ENCODE measurements at regions of chr19 and their contacts with region 1.

Region 1: GRCh38 chr19:40425450-40426287 is at the start of gene SERTAD1:
- DNase-seq: peak; percentile 98
- ATAC-seq: peak; percentile 79
- H3K4me3 ChIP-seq: peak within 1 kb of the TSS; percentile 65 to 84
- H3K27ac ChIP-seq: peak within 1 kb of the TSS; percentile 98
- H3K4me1 ChIP-seq: peaks cover 27 to 57% of the 10 kb centered on the region in 2 experiments
- H3K27me3 ChIP-seq: no peaks in the 10 kb centered on the region
- CTCF ChIP-seq: peak; percentile 23 to 82 (median 75); a peak in 5 of 6 replicates
- POLR2A ChIP-seq: peak; percentile 97
- RAD21 ChIP-seq: peak; percentile 36
- total RNA-seq, gene SERTAD1: 30.3 TPM

Region 2: DNA sequence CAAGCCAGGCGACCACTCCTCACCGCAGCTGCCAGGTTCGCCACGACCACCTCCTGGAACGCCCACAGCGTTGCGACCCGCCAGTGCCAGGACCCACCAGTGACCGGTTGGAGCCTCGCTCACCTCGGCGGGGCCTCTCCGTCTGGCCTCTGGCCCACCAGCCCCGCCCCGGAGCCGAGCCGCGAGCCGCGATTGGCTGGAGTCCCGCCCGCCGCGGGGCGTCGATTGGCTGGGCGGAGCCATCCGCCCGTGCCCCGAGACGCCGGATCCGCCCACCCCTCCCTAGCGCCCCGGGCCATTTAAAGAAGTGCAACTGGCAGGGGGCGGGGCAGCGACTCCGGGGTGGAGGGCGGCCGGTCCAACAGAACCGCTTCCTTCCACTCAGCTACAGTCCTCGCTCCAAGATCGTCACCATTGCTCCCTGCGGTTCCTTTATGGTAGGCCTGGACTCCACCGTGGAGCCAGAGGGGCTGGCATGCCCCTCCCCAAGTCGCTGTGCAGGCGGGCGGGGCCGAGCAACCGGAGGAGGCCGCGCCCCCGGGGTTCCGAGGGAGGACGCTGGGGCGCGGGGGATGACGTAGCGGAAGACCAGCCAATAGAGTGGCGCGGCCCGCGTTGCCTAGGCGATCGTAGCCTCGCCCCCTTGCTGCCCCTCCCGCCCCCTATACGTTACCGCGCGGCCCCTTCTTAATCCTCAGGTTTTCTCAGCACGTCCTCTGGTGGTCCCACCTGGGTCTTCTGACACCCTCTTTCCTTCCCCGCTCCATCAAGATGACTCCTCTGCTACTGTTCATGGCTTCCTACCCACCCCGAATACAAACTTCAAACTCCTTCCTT is 18.7 kb after region 1 on chr19 and contains the start of gene SERTAD3:
- CTCF ChIA-PET with region 1: interaction called, 10 read pairs
- POLR2A ChIA-PET with region 1: interaction called, 28 read pairs
- RAD21 ChIA-PET with region 1: no interaction called
- intact Hi-C with region 1: loop called (anchors 1 kb)
- DNase-seq: peak; percentile 85
- ATAC-seq: peak; percentile 75
- H3K4me3 ChIP-seq: peak within 1 kb of the TSS; percentile 71 to 100
- H3K27ac ChIP-seq: peak within 1 kb of the TSS; percentile 97
- H3K4me1 ChIP-seq: peaks cover 20 to 31% of the 10 kb centered on the region in 2 experiments
- H3K27me3 ChIP-seq: no peaks in the 10 kb centered on the region
- CTCF ChIP-seq: 0 out of 6 replicates have a peak, but pooled peaks of 1 of the 3 experiments have one; percentile 12
- POLR2A ChIP-seq: peak; percentile 71
- RAD21 ChIP-seq: peak; percentile 39
- total RNA-seq, gene SERTAD3: 32.4 TPM

Region 3: GRCh38 chr19:40502647-40503319 is 77.1 kb after region 1 on chr19:
- CTCF ChIA-PET with region 1: no interaction called
- POLR2A ChIA-PET with region 1: no interaction called
- RAD21 ChIA-PET with region 1: no interaction called
- intact Hi-C with region 1: no loop called
- DNase-seq: peak; percentile 41
- ATAC-seq: peak; percentile 99
- H3K4me3 ChIP-seq: no peak overlapping the region
- H3K27ac ChIP-seq: no peak overlapping the region
- H3K4me1 ChIP-seq: 0 out of 4 replicates have a peak, but pooled peaks cover 0 to 7% of the 10 kb centered on the region in 2 experiments
- H3K27me3 ChIP-seq: no peaks in the 10 kb centered on the region
- CTCF ChIP-seq: peak; percentile 15 to 51 (median 51); a peak in 4 of 6 replicates
- POLR2A ChIP-seq: no peak
- RAD21 ChIP-seq: peak; percentile 32; the same call in 1 of the 2 replicates